ENCODE measurements at regions of chr9 and their contacts with region 1.

Region 1: GRCh38 chr9:11045589-11045988 is 432.8 kb upstream of the PTPRD start:
- DNase-seq: peak; percentile 0
- H3K4me3 ChIP-seq: no peak overlapping the region
- H3K27ac ChIP-seq: no peak overlapping the region
- H3K4me1 ChIP-seq: no peaks in the 10 kb centered on the region
- H3K27me3 ChIP-seq: no peaks in the 10 kb centered on the region
- CTCF ChIP-seq: no peak

Region 2: GRCh38 chr9:10704720-10705119 is 340.9 kb before region 1 on chr9:
- CTCF ChIA-PET with region 1: no interaction called
- POLR2A ChIA-PET with region 1: no interaction called
- intact Hi-C with region 1: no loop called
- DNase-seq: no peak
- H3K4me3 ChIP-seq: no peak overlapping the region
- H3K27ac ChIP-seq: no peak overlapping the region
- H3K4me1 ChIP-seq: no peaks in the 10 kb centered on the region
- H3K27me3 ChIP-seq: no peaks in the 10 kb centered on the region
- CTCF ChIP-seq: no peak

Region 3: GRCh38 chr9:11128156-11128555 is 82.6 kb after region 1 on chr9:
- CTCF ChIA-PET with region 1: no interaction called
- POLR2A ChIA-PET with region 1: no interaction called
- intact Hi-C with region 1: loop called (anchors 5 kb)
- DNase-seq: no peak
- H3K4me3 ChIP-seq: no peak overlapping the region
- H3K27ac ChIP-seq: no peak overlapping the region
- H3K4me1 ChIP-seq: no peaks in the 10 kb centered on the region
- H3K27me3 ChIP-seq: no peaks in the 10 kb centered on the region
- CTCF ChIP-seq: no peak

Measured in A673 (cell line).